K562 (cell line): ENCODE measurements at regions of chr19 and their contacts with region 1.

Region 1: GRCh38 chr19:4208385-4209094 is 20.8 kb upstream of the EBI3 start:
- DNase-seq: peak in 3 of 4 experiments; percentile 55 to 59 (median 58)
- ATAC-seq: no peak
- H3K4me3 ChIP-seq: no peak overlapping the region
- H3K27ac ChIP-seq: no peak overlapping the region
- H3K4me1 ChIP-seq: peaks cover 5 to 28% of the 10 kb centered on the region in 2 experiments; a peak in 4 of 5 replicates
- H3K27me3 ChIP-seq: peaks cover 7 to 20% of the 10 kb centered on the region in 2 experiments; a peak in 3 of 5 replicates
- CTCF ChIP-seq: peak; percentile 20 to 35 (median 29); a peak in 2 of 6 replicates
- EP300 ChIP-seq: no peak
- POLR2A ChIP-seq: no peak
- RAD21 ChIP-seq: 0 out of 4 replicates have a peak, but pooled peaks of 1 of the 2 experiments have one; percentile 6

Region 2: DNA sequence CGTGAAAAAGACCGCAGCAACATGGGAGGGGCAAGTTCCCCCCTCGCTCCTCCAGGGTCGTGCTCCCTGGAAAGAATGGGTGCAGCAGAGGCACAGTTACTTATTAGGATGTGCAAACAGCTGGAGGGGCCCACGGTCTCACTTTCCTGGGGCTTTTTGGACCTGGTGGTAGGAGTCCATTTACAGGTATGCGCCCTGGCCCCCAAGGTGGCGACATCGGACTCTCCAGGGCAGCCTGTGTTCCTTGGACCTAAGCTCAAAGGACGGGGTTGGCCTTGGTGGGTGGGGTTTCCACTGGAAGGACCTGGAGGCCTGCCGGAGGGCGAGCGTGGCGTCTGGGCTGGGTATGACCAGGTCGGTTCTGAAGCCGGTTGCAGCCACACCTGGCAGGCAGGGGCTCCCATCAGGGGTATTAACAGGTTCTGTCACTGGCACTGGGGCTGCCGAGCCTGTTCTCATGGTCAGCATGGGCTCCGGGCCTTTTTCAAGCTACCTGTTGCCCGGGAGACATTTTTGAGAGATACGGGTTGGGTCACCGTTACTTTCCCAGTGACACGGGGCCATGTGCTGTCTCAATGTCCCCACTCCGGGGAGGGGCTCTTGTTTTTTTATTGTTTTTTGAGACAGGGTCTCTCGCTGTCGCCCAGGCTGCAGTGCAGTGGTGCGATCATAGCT is 345.6 kb before region 1 on chr19:
- CTCF ChIA-PET with region 1: no interaction called
- POLR2A ChIA-PET with region 1: no interaction called
- in situ Hi-C with region 1: loop called (anchors 5 kb)
- intact Hi-C with region 1: no loop called
- DNase-seq: no peak
- ATAC-seq: peak; percentile 77
- H3K4me3 ChIP-seq: no peak overlapping the region
- H3K27ac ChIP-seq: no peak overlapping the region
- H3K4me1 ChIP-seq: peaks cover 0 to 12% of the 10 kb centered on the region in 2 experiments; a peak in 2 of 5 replicates
- H3K27me3 ChIP-seq: peaks cover 59 to 69% of the 10 kb centered on the region in 2 experiments
- CTCF ChIP-seq: peak; percentile 21 to 41 (median 32); a peak in 3 of 6 replicates
- EP300 ChIP-seq: no peak
- POLR2A ChIP-seq: no peak
- RAD21 ChIP-seq: peak in 1 of 2 experiments; percentile 44; a peak in 2 of 4 replicates

Region 3: DNA sequence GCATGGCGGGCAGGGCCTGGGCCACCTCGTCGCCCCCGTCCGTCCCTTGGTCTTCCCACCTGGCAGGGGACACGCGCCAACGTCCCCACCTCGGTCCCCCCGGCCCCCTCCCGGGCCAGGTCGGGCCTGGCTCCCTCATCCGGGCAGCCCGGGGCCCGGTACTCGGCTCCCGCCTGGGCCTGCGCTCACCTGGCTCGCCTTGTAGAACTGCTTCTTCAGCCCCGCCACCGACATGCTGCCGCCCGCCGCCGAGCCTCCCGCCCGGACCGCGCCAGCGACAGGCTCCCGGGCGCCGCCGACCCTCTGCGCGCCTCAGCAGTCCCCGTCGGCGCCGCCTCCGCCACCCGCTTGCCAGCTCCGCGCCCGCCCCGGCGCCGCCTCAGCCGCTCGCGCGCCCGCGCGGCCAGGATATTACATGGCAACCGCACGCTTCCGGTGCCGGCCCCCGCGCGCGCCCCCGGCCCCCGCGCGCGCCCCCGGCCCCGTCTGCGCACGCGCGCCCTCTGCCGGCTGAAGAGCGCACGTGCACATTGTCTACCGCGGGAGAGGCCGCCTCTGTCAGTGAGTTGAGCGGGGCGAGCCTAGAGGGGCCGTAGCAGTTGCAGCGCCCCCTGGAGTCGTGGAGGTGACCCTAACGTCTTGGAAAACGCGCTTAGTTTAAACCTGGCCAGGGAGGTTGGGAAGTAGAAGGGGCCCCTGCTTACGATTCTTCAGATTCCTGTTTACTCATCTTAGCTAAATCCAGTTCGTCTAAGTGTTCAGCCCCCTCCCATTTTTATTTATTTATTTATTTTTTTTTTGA is 191.8 kb after region 1 on chr19 and contains the start of gene SH3GL1:
- CTCF ChIA-PET with region 1: no interaction called
- POLR2A ChIA-PET with region 1: no interaction called
- in situ Hi-C with region 1: no loop called
- intact Hi-C with region 1: no loop called
- DNase-seq: peak; percentile 80 to 95 (median 86)
- ATAC-seq: peak; percentile 54
- H3K4me3 ChIP-seq: peak within 1 kb of the TSS; percentile 99
- H3K27ac ChIP-seq: peak within 1 kb of the TSS; percentile 94
- H3K4me1 ChIP-seq: peaks cover 22 to 23% of the 10 kb centered on the region in 2 experiments; a peak in 4 of 5 replicates
- H3K27me3 ChIP-seq: no peaks in the 10 kb centered on the region
- CTCF ChIP-seq: peak; percentile 93 to 98 (median 98)
- EP300 ChIP-seq: peak; percentile 62
- POLR2A ChIP-seq: no peak
- RAD21 ChIP-seq: peak; percentile 52 to 63
- polyA plus RNA-seq, gene SH3GL1: 1.7 to 2.1 TPM